Adrenal gland (tissue), 19 donors: ENCODE measurements at regions of chr6 and their contacts with region 1.

Region 1: GRCh38 chr6:136235217-136235532 is 14.9 kb downstream of the MTFR2 start:
- DNase-seq: no peak
- H3K4me3 ChIP-seq: no peak overlapping the region
- H3K27ac ChIP-seq: no peak overlapping the region
- H3K4me1 ChIP-seq: no peaks in the 10 kb centered on the region
- H3K27me3 ChIP-seq: no peaks in the 10 kb centered on the region
- CTCF ChIP-seq: no peak
- POLR2A ChIP-seq: no peak

Region 2: GRCh38 chr6:135506270-135506997 is 728.7 kb before region 1 on chr6:
- intact Hi-C with region 1: loop called in 1 of 2 experiments (anchors 10 kb)
- DNase-seq: no peak
- H3K4me3 ChIP-seq: no peak overlapping the region
- H3K27ac ChIP-seq: no peak overlapping the region
- H3K4me1 ChIP-seq: no peaks in the 10 kb centered on the region
- H3K27me3 ChIP-seq: no peaks in the 10 kb centered on the region
- CTCF ChIP-seq: peak; percentile 17 to 60 (median 56)
- POLR2A ChIP-seq: no peak

Region 3: DNA sequence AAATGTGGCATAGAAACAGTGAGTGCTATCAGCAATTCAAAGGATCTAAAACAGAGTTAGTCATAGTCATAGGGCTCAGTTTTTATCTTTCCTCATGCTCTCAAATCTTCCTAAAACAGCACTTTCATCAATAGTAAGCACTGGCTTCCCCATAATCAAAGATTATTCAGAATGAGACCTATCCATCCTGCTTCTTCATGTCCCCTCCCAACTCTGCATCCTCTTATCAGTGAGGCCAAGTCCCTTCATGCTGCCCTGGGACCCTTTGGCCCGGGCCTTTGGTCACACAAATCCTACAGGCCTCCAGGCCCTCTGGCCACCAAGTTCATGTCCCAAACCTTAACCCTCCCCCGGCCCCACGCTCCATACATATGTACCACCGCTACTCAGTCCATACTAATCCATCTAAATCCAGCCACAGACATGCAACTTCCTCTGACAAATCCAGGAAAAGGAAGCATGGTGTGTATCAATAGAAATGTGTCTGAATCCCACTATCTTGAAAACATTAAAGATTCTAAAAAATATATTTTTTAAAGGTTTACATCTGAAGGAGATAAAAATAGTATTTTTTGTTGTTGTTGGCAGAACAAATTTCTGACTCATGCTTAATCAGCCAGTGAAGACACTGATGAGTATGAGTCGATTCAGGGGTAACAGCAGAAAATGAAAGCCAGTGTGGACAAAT is 240.2 kb before region 1 on chr6:
- intact Hi-C with region 1: no loop called
- DNase-seq: no peak
- H3K4me3 ChIP-seq: peak overlapping the region in 1 of 4 donors; percentile 7
- H3K27ac ChIP-seq: peak overlapping the region in 2 of 5 donors; percentile 42 to 60
- H3K4me1 ChIP-seq: peaks cover 7 to 8% of the 10 kb centered on the region in 2 donors
- H3K27me3 ChIP-seq: no peaks in the 10 kb centered on the region
- CTCF ChIP-seq: no peak
- POLR2A ChIP-seq: no peak